ENCODE measurements at regions of chr4 and their contacts with region 1.

Region 1: GRCh38 chr4:180449395-180449956 is 1793.7 kb upstream of the TENM3 start:
- DNase-seq: peak; percentile 89
- H3K4me3 ChIP-seq: peak overlapping the region; percentile 34
- H3K27ac ChIP-seq: peak overlapping the region; percentile 13
- H3K4me1 ChIP-seq: peaks cover 19% of the 10 kb centered on the region
- H3K27me3 ChIP-seq: no peaks in the 10 kb centered on the region
- CTCF ChIP-seq: peak; percentile 94

Region 2: GRCh38 chr4:180564026-180564425 is 114.5 kb after region 1 on chr4:
- CTCF ChIA-PET with region 1: interaction called, 3 read pairs
- POLR2A ChIA-PET with region 1: no interaction called
- intact Hi-C with region 1: loop called (anchors 1 kb)
- DNase-seq: peak; percentile 64
- H3K4me3 ChIP-seq: peak overlapping the region; percentile 48
- H3K27ac ChIP-seq: peak overlapping the region; percentile 92
- H3K4me1 ChIP-seq: peaks cover 61% of the 10 kb centered on the region
- H3K27me3 ChIP-seq: no peaks in the 10 kb centered on the region
- CTCF ChIP-seq: no peak

Region 3: GRCh38 chr4:180641495-180641894 is 192.0 kb after region 1 on chr4:
- CTCF ChIA-PET with region 1: interaction called, 3 read pairs
- POLR2A ChIA-PET with region 1: no interaction called
- intact Hi-C with region 1: loop called (anchors 2 kb)
- DNase-seq: peak; percentile 33
- H3K4me3 ChIP-seq: no peak overlapping the region
- H3K27ac ChIP-seq: no peak overlapping the region
- H3K4me1 ChIP-seq: peaks cover 16% of the 10 kb centered on the region
- H3K27me3 ChIP-seq: no peaks in the 10 kb centered on the region
- CTCF ChIP-seq: peak; percentile 49; the same call in 1 of the 2 replicates

Region 4: DNA sequence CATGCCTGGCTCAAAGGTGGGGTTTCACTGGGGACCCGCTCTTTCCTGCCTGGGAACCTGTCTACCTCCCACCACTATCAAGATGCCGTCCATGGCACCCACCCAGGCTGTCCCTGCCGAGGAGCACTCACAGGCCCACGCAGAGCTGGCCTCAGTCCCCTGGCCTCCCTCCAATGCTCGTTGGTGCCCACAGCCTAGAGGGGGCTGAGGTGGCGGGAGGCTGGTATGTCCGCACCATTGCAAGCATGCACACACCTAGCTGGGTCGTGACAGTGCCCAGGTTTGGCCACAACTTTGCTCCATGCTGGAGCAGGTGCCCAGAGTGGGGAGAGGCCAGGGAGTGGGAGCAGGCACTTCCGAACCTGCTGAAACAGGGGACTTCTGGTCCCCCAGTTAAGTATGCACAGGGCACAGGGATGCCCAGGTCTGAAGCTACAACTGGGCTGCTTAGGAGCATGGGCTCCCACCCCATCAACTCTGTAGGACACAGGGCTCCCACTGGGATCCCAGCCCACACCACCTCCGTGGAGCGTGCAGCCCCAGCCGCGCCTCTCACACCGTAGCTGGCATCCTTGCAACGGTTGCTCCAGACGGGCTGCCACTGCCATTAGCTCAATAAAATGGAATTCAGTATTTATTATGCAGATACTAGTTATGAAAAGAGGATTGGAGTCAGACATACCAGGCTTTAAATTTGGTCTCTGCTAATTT is 417.6 kb after region 1 on chr4:
- CTCF ChIA-PET with region 1: no interaction called
- POLR2A ChIA-PET with region 1: no interaction called
- intact Hi-C with region 1: no loop called
- DNase-seq: no peak
- H3K4me3 ChIP-seq: no peak overlapping the region
- H3K27ac ChIP-seq: no peak overlapping the region
- H3K4me1 ChIP-seq: no peaks in the 10 kb centered on the region
- H3K27me3 ChIP-seq: peaks cover 7% of the 10 kb centered on the region
- CTCF ChIP-seq: no peak

Measured in A673 (cell line).